CD8-positive, alpha-beta T cell (primary cell): ENCODE measurements at regions of chr4 and their contacts with region 1.

Region 1: DNA sequence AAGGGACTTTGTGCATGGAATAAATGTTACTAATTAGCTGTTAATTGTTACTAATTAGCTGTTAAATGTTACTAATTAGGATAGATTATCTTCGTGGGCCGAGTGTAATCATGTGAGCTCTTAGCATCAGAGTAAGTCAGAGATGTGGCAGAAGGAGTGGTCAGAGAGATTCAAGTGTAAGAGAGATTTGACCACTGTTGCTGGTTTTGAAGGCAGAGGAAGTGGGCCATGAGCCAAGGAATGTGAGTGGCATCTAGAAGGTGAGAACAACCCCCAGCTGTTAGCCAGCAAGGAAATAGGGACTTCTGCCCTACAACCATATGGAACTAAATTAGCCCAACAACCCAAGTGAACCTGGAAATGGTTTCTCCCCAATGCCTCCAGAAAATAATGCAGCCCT is 28.2 kb downstream of the ODAPH start:
- DNase-seq: no peak
- ATAC-seq: no peak
- H3K4me3 ChIP-seq: no peak overlapping the region
- H3K4me3 Mint-ChIP-seq: no peak overlapping the region
- H3K27ac ChIP-seq: no peak overlapping the region
- H3K27ac Mint-ChIP-seq: no peak overlapping the region
- H3K4me1 ChIP-seq: no peaks in the 10 kb centered on the region
- H3K4me1 Mint-ChIP-seq: no peaks in the 10 kb centered on the region
- H3K27me3 ChIP-seq: no peaks in the 10 kb centered on the region
- H3K27me3 Mint-ChIP-seq: peaks cover 14% of the 10 kb centered on the region
- CTCF ChIP-seq: no peak

Region 2: GRCh38 chr4:75555294-75556164 is 28.5 kb before region 1 on chr4 and contains the start of gene ODAPH:
- CTCF ChIA-PET with region 1: no interaction called
- POLR2A ChIA-PET with region 1: no interaction called
- intact Hi-C with region 1: loop called in 1 of 2 experiments (anchors 1 kb)
- DNase-seq: peak in 3 of 9 experiments; percentile 12 to 35 (median 23)
- ATAC-seq: peak; percentile 73
- H3K4me3 ChIP-seq: no peak within 1 kb of the TSS
- H3K4me3 Mint-ChIP-seq: no peak within 1 kb of the TSS
- H3K27ac ChIP-seq: no peak within 1 kb of the TSS
- H3K27ac Mint-ChIP-seq: no peak within 1 kb of the TSS
- H3K4me1 ChIP-seq: no peaks in the 10 kb centered on the region
- H3K4me1 Mint-ChIP-seq: no peaks in the 10 kb centered on the region
- H3K27me3 ChIP-seq: no peaks in the 10 kb centered on the region
- H3K27me3 Mint-ChIP-seq: peaks cover 18% of the 10 kb centered on the region
- CTCF ChIP-seq: no peak
- total RNA-seq, gene ODAPH: 0.16 TPM in 1 of 2 experiments, not detected in the other